ENCODE measurements at regions of chr11 and their contacts with region 1.

Region 1: DNA sequence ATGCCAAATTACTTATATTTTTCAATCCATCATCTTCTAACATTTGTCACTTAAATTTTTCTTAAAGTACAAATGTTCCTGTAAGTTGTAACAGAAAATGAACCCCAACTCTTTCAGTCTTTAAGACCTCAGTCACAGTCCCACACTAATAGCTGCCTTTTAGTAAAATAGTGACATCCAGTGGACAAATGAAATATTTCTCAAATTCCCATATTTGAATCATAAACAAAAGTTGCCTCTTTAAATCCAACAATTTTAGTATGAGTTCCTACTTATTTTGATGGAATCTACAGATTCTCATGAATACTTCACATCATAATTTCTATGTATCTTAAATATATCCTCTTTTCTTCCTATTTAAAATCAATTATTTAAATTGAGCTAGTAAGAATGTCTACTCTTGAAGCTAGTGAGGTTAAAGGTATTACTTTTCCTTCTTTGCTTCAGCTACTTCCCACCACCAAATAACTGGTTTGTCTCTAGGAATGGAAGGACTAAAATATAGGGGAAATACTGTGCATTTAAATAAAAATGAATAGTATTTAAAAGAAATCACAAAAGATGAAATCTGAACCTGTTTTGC is 9.2 kb downstream of the LIN7C start:
- DNase-seq: peak; percentile 21
- H3K4me3 ChIP-seq: no peak overlapping the region
- H3K27ac ChIP-seq: no peak overlapping the region
- H3K4me1 ChIP-seq: peaks cover 0 to 12% of the 10 kb centered on the region in 2 experiments; a peak in 2 of 4 replicates
- H3K27me3 ChIP-seq: no peaks in the 10 kb centered on the region
- CTCF ChIP-seq: peak; percentile 70
- EP300 ChIP-seq: no peak
- RAD21 ChIP-seq: peak; percentile 62

Region 2: GRCh38 chr11:27472398-27473016 is 24.9 kb before region 1 on chr11 and contains the start of gene LGR4:
- CTCF ChIA-PET with region 1: interaction called, 12 read pairs
- POLR2A ChIA-PET with region 1: no interaction called
- DNase-seq: peak; percentile 90
- H3K4me3 ChIP-seq: peak within 1 kb of the TSS; percentile 75 to 87
- H3K27ac ChIP-seq: peak within 1 kb of the TSS; percentile 63 to 75
- H3K4me1 ChIP-seq: peaks cover 10 to 33% of the 10 kb centered on the region in 2 experiments
- H3K27me3 ChIP-seq: no peaks in the 10 kb centered on the region
- CTCF ChIP-seq: no peak
- EP300 ChIP-seq: no peak
- RAD21 ChIP-seq: no peak
- polyA plus RNA-seq, gene LGR4: 2.6 and 4.6 TPM in 2 replicates

Region 3: GRCh38 chr11:27649800-27650199 is 152.4 kb after region 1 on chr11:
- CTCF ChIA-PET with region 1: interaction called, 10 read pairs
- POLR2A ChIA-PET with region 1: no interaction called
- DNase-seq: no peak
- H3K4me3 ChIP-seq: no peak overlapping the region
- H3K27ac ChIP-seq: no peak overlapping the region
- H3K4me1 ChIP-seq: peaks cover 0 to 36% of the 10 kb centered on the region in 2 experiments; a peak in 2 of 4 replicates
- H3K27me3 ChIP-seq: no peaks in the 10 kb centered on the region
- CTCF ChIP-seq: no peak
- EP300 ChIP-seq: no peak
- RAD21 ChIP-seq: no peak